Aorta (tissue), 5 donors: ENCODE measurements at regions of chr3 and their contacts with region 1.

Region 1: GRCh38 chr3:17207019-17207418 is 322.3 kb downstream of the PLCL2 start:
- DNase-seq: no peak
- ATAC-seq: peak; percentile 52
- H3K4me3 ChIP-seq: no peak overlapping the region
- H3K27ac ChIP-seq: peak overlapping the region in 1 of 2 donors; percentile 57
- H3K4me1 ChIP-seq: peaks cover 3 to 4% of the 10 kb centered on the region in 2 donors
- H3K27me3 ChIP-seq: no peaks in the 10 kb centered on the region

Region 2: GRCh38 chr3:17179381-17180210 is 27.4 kb before region 1 on chr3:
- intact Hi-C with region 1: loop called in 1 of 2 experiments (anchors 2 kb)
- DNase-seq: no peak
- ATAC-seq: peak; percentile 24
- H3K4me3 ChIP-seq: no peak overlapping the region
- H3K27ac ChIP-seq: no peak overlapping the region
- H3K4me1 ChIP-seq: peaks cover 6 to 7% of the 10 kb centered on the region in 2 donors
- H3K27me3 ChIP-seq: no peaks in the 10 kb centered on the region